ENCODE measurements at regions of chr14 and their contacts with region 1.

Region 1: GRCh38 chr14:102086972-102087761 is at the start of gene HSP90AA1:
- DNase-seq: peak; percentile 97
- total RNA-seq, gene HSP90AA1: 475 TPM

Region 2: DNA sequence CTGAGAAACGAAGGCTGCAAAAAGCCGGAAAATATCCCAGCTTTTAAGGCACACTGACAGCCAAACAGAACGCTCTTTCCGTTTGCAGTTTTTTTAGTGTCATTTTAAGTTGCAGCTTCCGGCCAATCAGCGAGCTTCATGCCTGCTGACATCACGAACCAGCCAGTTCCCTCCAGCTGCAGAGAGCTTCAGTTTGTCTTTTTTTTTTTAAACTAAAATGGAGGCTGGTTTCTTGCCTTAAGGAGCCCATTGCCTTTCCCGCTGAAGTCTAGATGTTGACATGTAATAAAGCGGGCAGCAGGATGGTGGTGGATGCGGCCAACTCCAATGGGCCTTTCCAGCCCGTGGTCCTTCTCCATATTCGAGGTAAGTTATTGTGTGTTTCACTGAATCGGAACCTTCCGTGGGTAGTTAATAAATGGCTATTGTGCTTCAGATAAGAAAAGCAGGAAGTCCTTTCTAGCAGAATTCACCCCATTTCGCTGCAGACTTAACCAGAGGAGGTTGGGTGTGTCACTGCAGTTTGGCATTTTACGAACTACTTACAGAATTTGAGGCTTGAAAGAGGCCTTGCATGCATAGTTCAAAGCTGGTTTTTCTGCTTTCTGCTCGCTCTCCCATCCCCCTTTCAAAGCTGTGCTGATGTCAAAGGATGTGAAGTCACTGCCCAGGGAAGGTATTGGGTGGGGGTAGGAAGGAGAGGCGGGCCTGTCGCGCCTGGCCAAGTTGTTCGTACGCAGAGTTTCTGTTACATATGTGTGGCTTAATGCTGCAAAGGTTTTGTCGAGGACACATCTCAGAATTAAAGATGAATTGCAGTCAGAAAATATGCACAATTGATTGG is 277.3 kb before region 1 on chr14:
- intact Hi-C with region 1: loop called (anchors 2 kb)
- DNase-seq: peak; percentile 92

Region 3: DNA sequence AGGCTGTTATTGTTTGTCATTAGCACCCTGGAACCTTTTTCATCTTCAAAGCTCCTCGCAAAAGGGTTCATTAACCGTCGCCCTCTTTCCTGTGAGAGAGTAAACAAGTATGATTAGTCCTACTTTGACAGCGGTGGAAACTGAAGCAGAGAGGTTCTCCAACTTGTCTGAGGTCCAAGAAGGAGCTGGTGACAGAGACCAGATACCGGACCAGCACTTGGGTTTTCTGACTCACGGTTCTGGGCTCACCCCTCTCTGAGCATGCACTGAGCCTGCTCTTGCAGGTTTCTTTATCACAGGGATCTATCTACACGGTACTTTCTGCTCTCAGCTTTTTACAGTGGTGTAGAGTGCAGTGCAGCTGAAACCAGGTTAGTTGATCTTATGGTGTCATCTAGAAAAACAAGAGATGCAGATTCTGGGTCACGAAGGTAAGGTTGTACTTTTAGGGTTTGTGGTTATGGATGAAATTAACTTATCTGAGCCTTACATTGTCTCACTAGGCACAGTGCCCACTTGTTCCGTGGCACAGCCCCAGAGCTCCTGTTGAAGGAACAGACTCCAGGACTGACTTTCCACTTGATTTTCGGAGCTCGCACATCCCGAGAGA is 263.6 kb before region 1 on chr14:
- intact Hi-C with region 1: no loop called
- DNase-seq: no peak

Region 4: GRCh38 chr14:101964297-101965144 is 122.6 kb before region 1 on chr14 and contains the start of gene DYNC1H1:
- intact Hi-C with region 1: loop called (anchors 5 kb)
- DNase-seq: peak; percentile 96
- total RNA-seq, gene DYNC1H1: 575 TPM

Region 5: DNA sequence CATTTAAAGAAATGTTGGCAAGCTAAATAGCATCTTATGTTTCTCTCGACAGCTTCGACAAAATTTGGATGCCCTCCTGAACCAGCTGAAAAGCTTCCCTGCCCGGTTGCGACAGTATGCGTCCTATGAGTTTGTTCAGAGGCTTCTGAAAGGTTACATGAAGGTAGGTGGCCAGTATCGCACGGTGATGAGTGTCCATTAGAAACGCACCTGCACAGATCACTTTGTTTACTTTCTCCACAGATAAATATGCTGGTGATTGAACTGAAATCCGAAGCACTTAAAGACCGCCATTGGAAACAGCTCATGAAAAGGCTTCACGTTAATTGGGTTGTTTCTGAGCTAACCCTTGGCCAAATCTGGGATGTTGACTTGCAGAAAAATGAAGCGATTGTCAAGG is 86.3 kb before region 1 on chr14:
- intact Hi-C with region 1: no loop called
- DNase-seq: no peak

Region 6: GRCh38 chr14:102043251-102044025 is 43.7 kb before region 1 on chr14:
- intact Hi-C with region 1: no loop called
- DNase-seq: no peak